HEK293T (cell line): ENCODE measurements at regions of chr19 and their contacts with region 1.

Region 1: GRCh38 chr19:7098701-7099596 is 29.4 kb downstream of the ZNF557 start:
- DNase-seq: peak; percentile 91

Region 2: DNA sequence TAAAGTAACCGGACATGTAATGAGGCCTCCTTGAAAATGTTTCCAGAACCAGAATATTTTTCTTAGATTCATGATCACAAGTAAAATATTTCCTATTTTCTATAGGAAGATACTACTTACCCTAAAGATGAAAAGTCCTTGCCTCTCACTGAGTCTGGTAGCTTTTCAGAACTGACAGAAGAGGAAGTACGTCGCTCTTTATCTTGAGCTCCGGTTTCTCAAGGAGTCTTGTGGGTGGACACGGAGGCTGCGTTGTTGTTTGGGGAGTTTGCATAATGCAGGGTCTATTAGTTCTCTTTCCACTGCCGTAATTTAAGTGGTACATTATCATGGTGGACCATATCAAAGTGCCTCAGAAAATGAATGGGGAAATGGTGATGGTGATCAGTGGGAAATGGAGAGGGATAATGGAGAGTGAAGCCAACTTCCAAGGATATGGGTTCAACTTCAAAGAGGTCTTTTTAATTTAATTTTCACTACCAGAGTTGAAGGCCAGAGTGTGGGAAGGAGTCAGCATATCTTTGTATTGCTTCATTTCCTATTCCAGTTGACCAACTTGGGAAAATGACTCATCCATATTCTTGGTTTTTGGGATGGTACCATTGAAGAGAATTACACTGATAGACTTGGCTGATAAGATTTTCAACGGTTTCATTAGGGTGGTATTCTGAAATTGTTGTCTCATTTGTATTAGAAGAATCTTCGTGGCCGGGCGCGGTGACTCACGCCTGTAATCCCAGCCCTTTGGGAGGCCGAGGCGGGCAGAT is 101.1 kb before region 1 on chr19:
- CTCF ChIA-PET with region 1: no interaction called
- POLR2A ChIA-PET with region 1: no interaction called
- DNase-seq: no peak

Region 3: GRCh38 chr19:7069042-7069903 is 29.7 kb before region 1 on chr19 and contains the start of gene ZNF557:
- CTCF ChIA-PET with region 1: no interaction called
- POLR2A ChIA-PET with region 1: interaction called, 31 read pairs
- DNase-seq: peak; percentile 93

Region 4: GRCh38 chr19:7125221-7125620 is 26.3 kb after region 1 on chr19:
- CTCF ChIA-PET with region 1: interaction called, 13 read pairs
- POLR2A ChIA-PET with region 1: interaction called, 3 read pairs
- DNase-seq: no peak

Region 5: DNA sequence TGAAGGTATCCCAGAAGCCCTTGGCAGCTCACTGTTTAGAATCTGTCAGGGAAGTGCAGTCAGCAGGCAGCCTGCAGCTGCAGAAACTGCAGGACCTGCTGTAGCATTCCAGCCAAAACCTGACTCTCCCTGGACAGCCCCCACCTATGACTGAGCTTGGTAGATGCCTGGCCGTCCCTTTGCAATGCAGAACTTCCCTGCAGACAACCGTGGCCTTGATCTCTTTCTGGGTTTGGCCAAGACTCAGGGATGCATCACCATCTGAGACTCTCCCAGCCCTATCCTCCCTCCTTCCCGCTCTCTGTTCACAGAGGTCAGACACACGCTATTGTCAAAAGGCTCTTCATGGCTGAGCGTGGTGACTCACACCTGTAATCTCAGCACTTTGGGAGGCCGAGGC is 70.0 kb after region 1 on chr19:
- CTCF ChIA-PET with region 1: no interaction called
- POLR2A ChIA-PET with region 1: no interaction called
- DNase-seq: no peak